Adrenal gland (tissue), 19 donors: ENCODE measurements at regions of chr16 and their contacts with region 1.

Region 1: GRCh38 chr16:51820176-51820575 is 669.1 kb upstream of the SALL1 start:
- DNase-seq: no peak
- H3K4me3 ChIP-seq: no peak overlapping the region
- H3K27ac ChIP-seq: no peak overlapping the region
- H3K4me1 ChIP-seq: no peaks in the 10 kb centered on the region
- H3K27me3 ChIP-seq: no peaks in the 10 kb centered on the region
- CTCF ChIP-seq: no peak
- POLR2A ChIP-seq: no peak

Region 2: DNA sequence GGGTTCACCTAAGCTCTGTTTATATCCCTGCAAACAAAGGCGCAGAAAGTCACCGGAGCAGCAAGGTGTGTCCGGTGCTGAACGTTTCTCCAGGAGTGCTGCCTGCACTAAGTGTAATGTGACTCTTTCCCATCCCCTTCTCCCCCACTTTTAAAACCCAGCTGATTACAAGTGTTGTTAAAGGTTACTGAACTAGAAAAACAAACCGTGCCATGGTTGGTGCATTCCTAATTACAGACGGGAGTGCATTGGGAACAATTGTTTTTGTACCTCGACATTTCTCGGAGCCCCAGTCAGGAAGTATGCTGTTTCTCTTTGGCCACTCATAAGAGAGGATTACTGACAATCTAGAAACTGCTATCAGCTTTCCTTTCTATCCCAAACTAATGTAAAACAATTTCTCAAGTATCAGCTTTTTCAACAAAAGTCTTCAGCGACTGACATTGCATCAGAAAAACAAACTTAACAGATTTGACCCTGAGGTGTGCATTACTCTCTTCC is 228.1 kb before region 1 on chr16:
- intact Hi-C with region 1: no loop called
- DNase-seq: no peak
- H3K4me3 ChIP-seq: no peak overlapping the region
- H3K27ac ChIP-seq: no peak overlapping the region
- H3K4me1 ChIP-seq: no peaks in the 10 kb centered on the region
- H3K27me3 ChIP-seq: peaks cover 4% of the 10 kb centered on the region
- CTCF ChIP-seq: no peak
- POLR2A ChIP-seq: no peak

Region 3: GRCh38 chr16:51982715-51983680 is 162.8 kb after region 1 on chr16:
- intact Hi-C with region 1: loop called in 1 of 2 experiments (anchors 5 kb)
- DNase-seq: peak; percentile 29 to 67 (median 50)
- H3K4me3 ChIP-seq: no peak overlapping the region
- H3K27ac ChIP-seq: no peak overlapping the region
- H3K4me1 ChIP-seq: peaks cover 0 to 7% of the 10 kb centered on the region in 2 donors
- H3K27me3 ChIP-seq: no peaks in the 10 kb centered on the region
- CTCF ChIP-seq: peak; percentile 71 to 80 (median 78)
- POLR2A ChIP-seq: no peak